CD8-positive, alpha-beta memory T cell (primary cell): ENCODE measurements at regions of chrX and their contacts with region 1.

Region 1: GRCh38 chrX:72573158-72573511 is 492 bp upstream of the HDAC8 start:
- DNase-seq: no peak
- H3K4me3 ChIP-seq: peak overlapping the region; percentile 96
- H3K4me3 Mint-ChIP-seq: peak overlapping the region; percentile 88 to 99 (median 93)
- H3K27ac ChIP-seq: no peak overlapping the region
- H3K27ac Mint-ChIP-seq: peak overlapping the region in 7 of 8 donors; percentile 4 to 95 (median 84)
- H3K4me1 ChIP-seq: no peaks in the 10 kb centered on the region
- H3K4me1 Mint-ChIP-seq: peaks cover 8 to 16% (median 9%) of the 10 kb centered on the region in 3 donors
- H3K27me3 ChIP-seq: no peaks in the 10 kb centered on the region
- H3K27me3 Mint-ChIP-seq: peaks cover 0 to 20% of the 10 kb centered on the region in 2 donors

Region 2: DNA sequence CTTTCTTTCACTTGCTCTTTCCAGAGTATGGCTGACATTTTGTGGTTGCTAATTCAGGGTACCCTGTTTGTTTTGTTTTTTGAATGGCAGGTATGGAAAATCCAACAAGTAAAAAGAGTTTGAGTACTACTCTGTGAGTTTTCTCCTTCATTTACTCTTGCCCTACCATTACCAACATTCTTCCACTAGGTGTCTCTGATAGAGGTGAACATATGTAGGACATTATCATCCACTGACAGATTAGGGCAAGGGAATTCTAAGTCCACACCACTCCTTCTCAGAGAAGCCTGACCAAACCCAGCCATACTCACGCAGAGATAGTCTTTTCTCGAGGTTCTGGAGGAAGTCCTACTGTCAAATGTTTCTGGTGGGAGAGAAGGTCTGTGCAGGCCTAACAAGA is 36.2 kb after region 1 on chrX:
- CTCF ChIA-PET with region 1: no interaction called
- POLR2A ChIA-PET with region 1: no interaction called
- DNase-seq: no peak
- H3K4me3 ChIP-seq: no peak overlapping the region
- H3K4me3 Mint-ChIP-seq: no peak overlapping the region
- H3K27ac ChIP-seq: no peak overlapping the region
- H3K27ac Mint-ChIP-seq: no peak overlapping the region
- H3K4me1 ChIP-seq: no peaks in the 10 kb centered on the region
- H3K4me1 Mint-ChIP-seq: peaks cover 0 to 6% (median 0%) of the 10 kb centered on the region in 3 donors
- H3K27me3 ChIP-seq: no peaks in the 10 kb centered on the region
- H3K27me3 Mint-ChIP-seq: peaks cover 3 to 19% of the 10 kb centered on the region in 2 donors

Region 3: DNA sequence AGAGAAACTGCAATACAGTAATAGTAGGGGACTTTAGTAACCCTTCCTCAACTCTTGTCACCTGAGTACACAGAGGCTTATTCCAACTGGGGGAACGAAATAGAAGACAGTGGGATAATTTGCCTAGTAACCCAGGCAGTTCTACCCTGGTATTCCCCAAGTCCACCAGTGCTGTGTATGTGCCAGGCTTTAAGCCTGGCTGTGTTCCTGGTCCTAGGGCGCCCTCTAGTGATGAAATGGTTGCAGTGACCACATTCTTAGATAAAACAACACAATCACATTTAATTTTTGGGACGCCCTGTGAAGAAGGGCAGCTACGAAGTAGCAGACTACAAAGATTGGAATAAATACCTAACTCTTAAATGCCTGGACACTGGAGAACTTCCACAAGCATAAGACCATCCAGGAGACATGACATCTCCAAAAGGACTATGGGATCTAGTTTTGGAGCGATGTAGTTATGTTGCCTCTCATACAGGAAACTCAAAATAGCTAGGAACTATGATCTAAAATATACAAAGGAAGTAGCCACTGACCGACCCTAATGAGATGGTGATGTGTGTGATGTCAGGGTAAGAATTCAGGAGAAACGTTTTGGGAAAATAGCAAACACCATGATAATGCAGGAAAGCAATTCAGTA is 1442.4 kb after region 1 on chrX:
- CTCF ChIA-PET with region 1: no interaction called
- POLR2A ChIA-PET with region 1: interaction called, 10 read pairs
- DNase-seq: peak; percentile 35 to 69 (median 58)
- H3K4me3 ChIP-seq: no peak overlapping the region
- H3K4me3 Mint-ChIP-seq: no peak overlapping the region
- H3K27ac ChIP-seq: no peak overlapping the region
- H3K27ac Mint-ChIP-seq: no peak overlapping the region
- H3K4me1 ChIP-seq: no peaks in the 10 kb centered on the region
- H3K4me1 Mint-ChIP-seq: peaks cover 0 to 9% (median 0%) of the 10 kb centered on the region in 3 donors
- H3K27me3 ChIP-seq: no peaks in the 10 kb centered on the region
- H3K27me3 Mint-ChIP-seq: peaks cover 2 to 3% of the 10 kb centered on the region in 2 donors